Gastrocnemius medialis (tissue), 4 donors: ENCODE measurements at regions of chr9 and their contacts with region 1.

Region 1: GRCh38 chr9:127318651-127319167 is 54.1 kb downstream of the GARNL3 start:
- DNase-seq: peak in 1 of 2 donors; percentile 41
- ATAC-seq: peak; percentile 82 to 91
- H3K4me3 ChIP-seq: no peak overlapping the region
- H3K27ac ChIP-seq: peak overlapping the region; percentile 69 to 87 (median 75)
- H3K4me1 ChIP-seq: peaks cover 23% of the 10 kb centered on the region in 2 donors
- H3K27me3 ChIP-seq: no peaks in the 10 kb centered on the region
- CTCF ChIP-seq: no peak
- POLR2A ChIP-seq: no peak

Region 2: DNA sequence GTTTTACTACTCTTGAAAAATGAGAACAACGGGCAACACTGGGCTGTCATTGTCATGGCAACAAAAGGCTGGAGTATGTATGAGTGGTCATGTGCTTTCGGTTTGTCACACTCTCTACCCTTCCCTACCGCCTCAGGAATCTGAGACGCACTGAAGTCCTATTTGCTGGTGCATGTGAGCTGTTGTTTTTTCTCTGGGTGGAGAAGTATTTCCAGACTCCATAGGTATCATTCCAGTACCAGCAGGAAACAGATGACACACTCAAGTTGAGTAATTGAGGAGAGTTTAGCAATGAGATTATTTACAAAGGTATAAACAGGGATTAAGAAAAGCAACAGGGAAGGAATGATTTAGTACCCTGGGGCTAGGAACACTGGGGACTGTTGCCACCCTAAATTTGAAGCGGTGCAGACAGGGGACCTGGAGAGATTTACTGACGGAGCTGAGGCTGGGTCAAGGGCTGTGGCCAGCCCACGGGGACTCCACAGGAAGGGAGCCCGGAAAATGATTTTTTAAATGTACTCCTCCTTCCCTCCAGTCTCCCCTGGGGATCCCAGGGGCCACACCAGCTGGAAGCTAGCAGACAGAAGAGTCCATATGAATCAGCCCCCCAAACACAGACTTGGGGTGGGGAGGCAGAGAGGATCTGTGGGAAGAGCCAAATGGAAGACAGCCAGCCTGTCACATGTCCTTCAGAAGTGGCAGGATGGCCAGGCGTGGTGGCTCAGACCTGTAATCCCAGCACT is 527.1 kb before region 1 on chr9:
- in situ Hi-C with region 1: no loop called
- intact Hi-C with region 1: no loop called
- DNase-seq: peak; percentile 79 to 80
- ATAC-seq: peak; percentile 81 to 82
- H3K4me3 ChIP-seq: no peak overlapping the region
- H3K27ac ChIP-seq: peak overlapping the region; percentile 88 to 96 (median 93)
- H3K4me1 ChIP-seq: peaks cover 27 to 46% of the 10 kb centered on the region in 2 donors
- H3K27me3 ChIP-seq: no peaks in the 10 kb centered on the region
- CTCF ChIP-seq: no peak
- POLR2A ChIP-seq: peak in 1 of 2 donors; percentile 59

Region 3: GRCh38 chr9:127283917-127284316 is 34.8 kb before region 1 on chr9:
- in situ Hi-C with region 1: no loop called
- intact Hi-C with region 1: loop called (anchors 2 kb)
- DNase-seq: peak; percentile 31 to 47
- ATAC-seq: peak; percentile 51 to 74
- H3K4me3 ChIP-seq: no peak overlapping the region
- H3K27ac ChIP-seq: no peak overlapping the region
- H3K4me1 ChIP-seq: no peaks in the 10 kb centered on the region
- H3K27me3 ChIP-seq: no peaks in the 10 kb centered on the region
- CTCF ChIP-seq: peak in 2 of 5 experiments; percentile 42 to 43
- POLR2A ChIP-seq: no peak

Region 4: GRCh38 chr9:127333221-127334064 is 14.7 kb after region 1 on chr9:
- in situ Hi-C with region 1: no loop called
- intact Hi-C with region 1: loop called (anchors 2 kb)
- DNase-seq: peak; percentile 24 to 60
- ATAC-seq: peak; percentile 51 to 61
- H3K4me3 ChIP-seq: no peak overlapping the region
- H3K27ac ChIP-seq: peak overlapping the region; percentile 77 to 92 (median 84)
- H3K4me1 ChIP-seq: peaks cover 57 to 62% of the 10 kb centered on the region in 2 donors
- H3K27me3 ChIP-seq: no peaks in the 10 kb centered on the region
- CTCF ChIP-seq: no peak
- POLR2A ChIP-seq: no peak